Activated CD4-positive, alpha-beta T cell treated with anti-CD3 and anti-CD28 coated beads for 36 hours (primary cell): ENCODE measurements at regions of chr19 and their contacts with region 1.

Region 1: GRCh38 chr19:49877020-49877878 is at the starts of genes AKT1S1 and TBC1D17:
- DNase-seq: peak; percentile 99
- ATAC-seq: peak; percentile 75
- H3K4me3 Mint-ChIP-seq: no peak within 1 kb of the TSS
- H3K27ac Mint-ChIP-seq: no peak within 1 kb of the TSS
- H3K4me1 Mint-ChIP-seq: peaks cover 25% of the 10 kb centered on the region
- H3K27me3 Mint-ChIP-seq: no peaks in the 10 kb centered on the region
- total RNA-seq, gene AKT1S1: 16.1 to 20.3 TPM
- total RNA-seq, gene TBC1D17: 29.1 to 29.6 TPM

Region 2: GRCh38 chr19:48363810-48364563 is 1513.3 kb before region 1 on chr19 and contains the starts of genes SYNGR4 and TMEM143:
- CTCF ChIA-PET with region 1: no interaction called
- POLR2A ChIA-PET with region 1: no interaction called
- intact Hi-C with region 1: loop called in 1 of 2 experiments (anchors 5 kb)
- DNase-seq: peak; percentile 99
- ATAC-seq: peak; percentile 90
- H3K4me3 Mint-ChIP-seq: peak within 1 kb of the TSS; percentile 84
- H3K27ac Mint-ChIP-seq: peak within 1 kb of the TSS; percentile 95
- H3K4me1 Mint-ChIP-seq: peaks cover 13% of the 10 kb centered on the region
- H3K27me3 Mint-ChIP-seq: no peaks in the 10 kb centered on the region
- total RNA-seq, gene SYNGR4: 0.25 TPM in 1 of 2 experiments, not detected in the other
- total RNA-seq, gene TMEM143: 18.9 to 21.5 TPM

Region 3: DNA sequence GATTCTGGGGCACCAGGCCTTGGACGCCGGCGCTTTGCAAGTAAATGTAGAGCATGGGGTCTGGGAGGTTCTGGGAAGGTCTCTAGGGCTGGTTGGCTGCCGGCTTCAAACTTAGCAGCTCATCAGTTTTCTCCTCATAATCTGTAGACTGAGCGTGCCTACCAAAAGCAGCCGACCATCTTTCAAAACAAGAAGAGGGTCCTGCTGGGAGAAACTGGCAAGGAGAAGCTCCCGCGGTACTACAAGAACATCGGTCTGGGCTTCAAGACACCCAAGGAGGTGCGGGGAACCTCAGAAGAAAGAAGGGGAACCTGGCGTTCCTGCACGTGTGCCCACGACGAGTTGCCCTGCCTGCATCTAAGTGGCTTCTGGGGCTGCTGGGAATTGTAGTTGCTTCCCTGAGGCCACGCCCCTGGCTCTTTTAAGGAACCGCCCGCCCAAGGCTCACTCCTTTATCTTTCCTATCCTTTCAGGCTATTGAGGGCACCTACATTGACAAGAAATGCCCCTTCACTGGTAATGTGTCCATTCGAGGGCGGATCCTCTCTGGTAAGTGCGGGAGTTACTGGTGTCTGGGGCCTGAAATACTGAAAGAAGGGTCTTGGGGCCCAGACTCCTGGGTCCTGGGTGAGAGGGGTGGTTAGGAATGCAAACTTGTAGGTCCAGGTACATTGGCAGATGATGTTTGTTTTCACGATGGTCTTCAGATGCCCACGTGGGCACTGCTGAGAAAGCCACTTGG is 380.0 kb before region 1 on chr19:
- CTCF ChIA-PET with region 1: interaction called, 3 read pairs
- POLR2A ChIA-PET with region 1: no interaction called
- intact Hi-C with region 1: loop called in 1 of 2 experiments (anchors 1 kb)
- DNase-seq: peak; percentile 86
- ATAC-seq: peak; percentile 5
- H3K4me3 Mint-ChIP-seq: peak overlapping the region; percentile 93
- H3K27ac Mint-ChIP-seq: peak overlapping the region; percentile 98
- H3K4me1 Mint-ChIP-seq: peaks cover 47% of the 10 kb centered on the region
- H3K27me3 Mint-ChIP-seq: no peaks in the 10 kb centered on the region

Region 4: DNA sequence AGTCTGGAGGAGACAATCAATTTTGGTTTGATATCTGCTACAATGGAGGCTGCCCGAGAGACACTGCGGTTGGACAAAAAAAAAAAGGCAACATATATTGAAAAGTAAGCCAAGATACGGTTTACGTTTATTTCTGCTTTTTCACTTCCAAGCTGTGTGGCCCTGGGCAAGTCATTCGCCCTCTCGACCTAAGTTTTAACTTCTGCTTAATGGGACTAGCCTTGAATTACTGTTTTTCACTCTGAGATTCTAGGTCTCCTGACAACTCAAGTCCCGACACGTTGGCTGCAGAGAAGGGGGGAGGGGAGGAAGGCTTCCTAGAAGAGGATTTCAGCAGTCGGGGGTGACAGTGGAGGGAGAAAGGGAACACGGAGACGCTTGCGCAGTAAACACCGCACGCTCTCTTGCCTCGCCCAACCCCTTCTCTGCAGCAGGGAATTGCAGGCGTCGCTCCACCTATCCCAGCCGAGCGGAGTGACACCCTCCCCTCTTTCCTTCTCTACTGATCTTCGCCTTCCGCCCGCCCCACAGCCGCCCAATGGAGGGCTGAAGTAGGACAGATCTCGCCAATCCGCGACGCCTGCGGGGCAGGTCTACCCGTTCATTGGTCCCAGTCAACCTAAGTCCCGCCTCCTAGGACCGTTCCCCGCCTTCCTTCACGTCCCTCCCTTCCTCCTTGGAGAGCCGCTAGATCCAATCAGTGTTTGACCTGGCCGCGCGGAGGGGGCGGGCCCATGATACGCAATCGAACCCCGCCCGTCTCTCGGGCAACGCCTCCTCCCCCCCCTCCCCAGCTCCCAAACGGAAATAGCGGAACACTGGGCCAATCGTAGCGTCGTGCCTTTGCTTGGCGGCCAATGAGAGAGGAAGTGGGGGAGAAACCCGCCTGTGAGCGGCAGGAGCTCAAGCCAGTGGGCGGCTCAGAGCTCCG is 111.0 kb before region 1 on chr19:
- CTCF ChIA-PET with region 1: interaction called, 3 read pairs
- POLR2A ChIA-PET with region 1: no interaction called
- intact Hi-C with region 1: loop called (anchors 1 kb)
- DNase-seq: peak; percentile 99
- ATAC-seq: peak; percentile 93
- H3K4me3 Mint-ChIP-seq: peak overlapping the region; percentile 94
- H3K27ac Mint-ChIP-seq: peak overlapping the region; percentile 93
- H3K4me1 Mint-ChIP-seq: peaks cover 36% of the 10 kb centered on the region
- H3K27me3 Mint-ChIP-seq: no peaks in the 10 kb centered on the region

Region 5: DNA sequence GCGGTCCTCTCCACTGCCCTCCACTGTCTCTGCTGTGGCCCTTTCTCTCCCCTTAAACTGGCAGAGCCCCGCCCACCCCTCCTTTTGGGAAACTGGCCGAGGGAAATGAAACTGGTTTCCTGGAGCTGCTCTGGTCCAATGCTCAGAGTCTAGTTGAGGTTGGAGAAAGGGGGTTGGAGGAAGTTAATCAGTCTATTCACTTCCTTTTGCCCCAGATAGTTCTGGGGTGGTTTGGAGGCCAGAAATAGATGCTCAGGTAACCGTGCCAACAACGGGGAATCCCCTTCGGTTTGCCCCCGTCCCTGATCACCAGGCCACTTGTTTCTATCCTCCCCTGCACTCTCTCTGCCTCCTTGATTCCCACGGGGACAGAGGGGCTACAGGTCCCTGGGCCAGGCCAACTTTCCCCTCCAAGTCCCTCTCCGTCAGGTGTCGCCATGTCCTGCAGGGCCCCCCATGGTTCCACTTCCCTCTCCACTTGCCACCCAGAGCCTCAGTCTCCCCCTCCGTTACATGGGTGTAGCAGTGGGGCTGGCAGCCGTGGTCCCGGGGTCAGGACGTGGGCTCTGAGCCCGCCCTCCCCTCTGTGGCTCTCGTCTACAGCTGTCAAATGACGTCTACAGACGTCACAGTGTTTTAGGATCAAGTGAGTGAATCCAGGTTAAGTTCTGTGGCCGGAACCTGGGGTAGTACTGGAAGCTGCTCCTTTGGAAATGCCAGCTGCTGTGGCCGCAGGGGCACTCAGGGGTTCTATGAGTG is 19.8 kb after region 1 on chr19 and contains the start of gene IL4I1:
- CTCF ChIA-PET with region 1: interaction called, 3 read pairs
- POLR2A ChIA-PET with region 1: interaction called, 3 read pairs
- intact Hi-C with region 1: loop called (anchors 1 to 2 kb)
- DNase-seq: peak; percentile 79
- ATAC-seq: peak; percentile 65
- H3K4me3 Mint-ChIP-seq: peak within 1 kb of the TSS; percentile 70
- H3K27ac Mint-ChIP-seq: peak within 1 kb of the TSS; percentile 95
- H3K4me1 Mint-ChIP-seq: peaks cover 49% of the 10 kb centered on the region
- H3K27me3 Mint-ChIP-seq: no peaks in the 10 kb centered on the region
- total RNA-seq, gene IL4I1: 21.2 to 22.2 TPM

Region 6: DNA sequence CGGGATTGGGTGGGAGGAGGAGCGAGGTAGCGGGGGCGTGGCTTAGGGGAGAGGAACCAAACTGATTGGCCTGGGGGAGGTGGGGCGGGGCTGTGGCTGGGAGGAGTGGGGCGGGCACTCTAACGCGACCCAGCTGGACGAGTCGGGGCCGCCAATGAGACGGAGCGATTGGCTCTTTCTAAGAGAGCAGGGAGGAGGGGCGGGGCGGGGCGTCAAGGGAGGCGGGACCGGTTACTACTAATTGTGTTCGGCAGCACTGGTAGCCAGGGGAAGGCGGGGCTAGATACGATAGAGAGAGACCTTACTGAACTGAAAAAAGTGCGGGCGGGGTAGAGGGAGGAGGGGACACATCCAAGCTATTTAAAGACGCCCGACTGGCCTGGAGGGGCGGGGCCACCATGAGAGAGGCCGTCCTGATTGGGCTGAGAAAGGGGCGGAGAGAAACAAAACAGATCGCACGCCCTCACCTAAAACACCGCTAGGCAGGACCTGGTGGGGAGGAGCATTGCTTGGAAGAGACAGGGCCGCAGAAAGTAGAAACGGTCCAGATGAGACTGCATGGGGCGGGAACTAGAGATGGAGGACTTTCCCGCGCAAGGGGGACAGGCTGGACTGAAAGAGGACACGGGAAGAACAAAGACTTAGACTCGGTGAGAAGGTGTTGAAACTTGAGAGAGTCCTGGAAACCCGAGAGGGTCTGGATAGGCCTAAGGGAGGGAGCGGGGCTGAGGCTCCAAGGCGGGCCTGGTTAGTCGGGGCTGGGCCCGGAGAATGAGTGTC is 452.1 kb after region 1 on chr19 and contains the start of gene KCNC3:
- CTCF ChIA-PET with region 1: no interaction called
- POLR2A ChIA-PET with region 1: no interaction called
- intact Hi-C with region 1: loop called in 1 of 2 experiments (anchors 5 kb)
- DNase-seq: peak; percentile 99
- ATAC-seq: peak; percentile 67
- H3K4me3 Mint-ChIP-seq: peak within 1 kb of the TSS; percentile 75
- H3K27ac Mint-ChIP-seq: peak within 1 kb of the TSS; percentile 86
- H3K4me1 Mint-ChIP-seq: peaks cover 59% of the 10 kb centered on the region
- H3K27me3 Mint-ChIP-seq: peaks cover 33% of the 10 kb centered on the region
- total RNA-seq, gene KCNC3: 9.1 to 9.7 TPM